GM18951 (cell line): ENCODE measurements at regions of chr15 and their contacts with region 1.

Region 1: GRCh38 chr15:78778422-78778821 is 32.8 kb downstream of the ADAMTS7 start:
- POLR2A ChIP-seq: no peak

Region 2: GRCh38 chr15:77975332-77976094 is 802.9 kb before region 1 on chr15:
- in situ Hi-C with region 1: loop called (anchors 5 kb)
- POLR2A ChIP-seq: no peak

Region 3: GRCh38 chr15:78455749-78456148 is 322.7 kb before region 1 on chr15:
- in situ Hi-C with region 1: no loop called
- POLR2A ChIP-seq: no peak